ENCODE measurements at regions of chr15 and their contacts with region 1.

Region 1: DNA sequence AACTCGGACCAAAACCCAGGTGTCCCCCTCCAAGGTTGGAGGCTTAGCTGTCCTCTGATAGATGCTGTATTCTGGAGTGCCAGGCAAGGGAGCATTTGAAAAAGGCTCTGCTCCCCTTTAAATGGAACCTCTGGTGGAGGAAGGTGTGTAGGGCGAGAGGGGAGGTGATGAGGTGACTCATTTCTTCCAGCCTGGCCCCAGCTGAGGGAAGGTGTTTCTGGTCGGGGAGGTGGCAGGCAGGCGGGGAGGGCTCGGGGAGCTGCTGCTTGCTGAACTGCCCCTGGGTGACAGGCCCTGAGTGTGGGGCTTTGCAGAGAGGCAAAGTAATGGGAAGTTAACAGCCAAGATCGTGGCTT is 18.8 kb downstream of the PSTPIP1 start:
- DNase-seq: no peak
- ATAC-seq: peak; percentile 82
- H3K4me3 ChIP-seq: no peak overlapping the region
- H3K27ac ChIP-seq: peak overlapping the region; percentile 66; the same call in 1 of the 2 replicates
- H3K4me1 ChIP-seq: peaks cover 31% of the 10 kb centered on the region
- H3K27me3 ChIP-seq: no peaks in the 10 kb centered on the region
- CTCF ChIP-seq: 0 out of 6 replicates have a peak, but pooled peaks of 1 of the 3 experiments have one; percentile 1
- EP300 ChIP-seq: peak; percentile 52 to 54; a peak in 3 of 4 replicates
- POLR2A ChIP-seq: no peak
- RAD21 ChIP-seq: no peak

Region 2: GRCh38 chr15:76846782-76847181 is 167.0 kb before region 1 on chr15:
- CTCF ChIA-PET with region 1: no interaction called
- POLR2A ChIA-PET with region 1: no interaction called
- RAD21 ChIA-PET with region 1: no interaction called
- SMC1A ChIA-PET with region 1: no interaction called
- in situ Hi-C with region 1: no loop called
- intact Hi-C with region 1: no loop called
- DNase-seq: no peak
- ATAC-seq: no peak
- H3K4me3 ChIP-seq: no peak overlapping the region
- H3K27ac ChIP-seq: no peak overlapping the region
- H3K4me1 ChIP-seq: peaks cover 6% of the 10 kb centered on the region; the same call in 1 of the 2 replicates
- H3K27me3 ChIP-seq: no peaks in the 10 kb centered on the region
- CTCF ChIP-seq: no peak
- EP300 ChIP-seq: no peak
- POLR2A ChIP-seq: no peak
- RAD21 ChIP-seq: no peak

Region 3: DNA sequence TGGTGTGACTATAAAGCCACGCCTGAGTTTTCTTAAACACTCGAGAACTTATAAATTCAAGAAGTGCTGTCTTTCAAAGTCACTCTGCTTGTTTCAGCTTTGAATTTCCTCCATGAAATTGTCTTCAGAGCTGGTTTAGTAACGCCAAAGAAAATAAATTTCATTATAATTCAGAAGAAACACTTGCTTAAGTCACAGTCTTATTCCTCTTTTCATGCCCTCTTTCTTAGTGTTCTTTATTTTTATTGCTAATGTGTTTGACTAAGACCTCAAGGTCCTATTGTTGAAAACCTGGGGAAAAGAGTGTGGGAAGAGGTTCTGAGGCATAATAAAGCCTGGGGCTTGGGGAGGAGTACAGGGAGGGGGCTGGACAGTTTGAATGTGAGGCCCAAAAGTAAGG is 85.5 kb before region 1 on chr15:
- CTCF ChIA-PET with region 1: no interaction called
- POLR2A ChIA-PET with region 1: no interaction called
- RAD21 ChIA-PET with region 1: no interaction called
- SMC1A ChIA-PET with region 1: no interaction called
- in situ Hi-C with region 1: no loop called
- intact Hi-C with region 1: no loop called
- DNase-seq: no peak
- ATAC-seq: no peak
- H3K4me3 ChIP-seq: no peak overlapping the region
- H3K27ac ChIP-seq: no peak overlapping the region
- H3K4me1 ChIP-seq: no peaks in the 10 kb centered on the region
- H3K27me3 ChIP-seq: peaks cover 0 to 2% of the 10 kb centered on the region in 2 experiments; a peak in 2 of 4 replicates
- CTCF ChIP-seq: no peak
- EP300 ChIP-seq: no peak
- POLR2A ChIP-seq: no peak
- RAD21 ChIP-seq: no peak

Region 4: DNA sequence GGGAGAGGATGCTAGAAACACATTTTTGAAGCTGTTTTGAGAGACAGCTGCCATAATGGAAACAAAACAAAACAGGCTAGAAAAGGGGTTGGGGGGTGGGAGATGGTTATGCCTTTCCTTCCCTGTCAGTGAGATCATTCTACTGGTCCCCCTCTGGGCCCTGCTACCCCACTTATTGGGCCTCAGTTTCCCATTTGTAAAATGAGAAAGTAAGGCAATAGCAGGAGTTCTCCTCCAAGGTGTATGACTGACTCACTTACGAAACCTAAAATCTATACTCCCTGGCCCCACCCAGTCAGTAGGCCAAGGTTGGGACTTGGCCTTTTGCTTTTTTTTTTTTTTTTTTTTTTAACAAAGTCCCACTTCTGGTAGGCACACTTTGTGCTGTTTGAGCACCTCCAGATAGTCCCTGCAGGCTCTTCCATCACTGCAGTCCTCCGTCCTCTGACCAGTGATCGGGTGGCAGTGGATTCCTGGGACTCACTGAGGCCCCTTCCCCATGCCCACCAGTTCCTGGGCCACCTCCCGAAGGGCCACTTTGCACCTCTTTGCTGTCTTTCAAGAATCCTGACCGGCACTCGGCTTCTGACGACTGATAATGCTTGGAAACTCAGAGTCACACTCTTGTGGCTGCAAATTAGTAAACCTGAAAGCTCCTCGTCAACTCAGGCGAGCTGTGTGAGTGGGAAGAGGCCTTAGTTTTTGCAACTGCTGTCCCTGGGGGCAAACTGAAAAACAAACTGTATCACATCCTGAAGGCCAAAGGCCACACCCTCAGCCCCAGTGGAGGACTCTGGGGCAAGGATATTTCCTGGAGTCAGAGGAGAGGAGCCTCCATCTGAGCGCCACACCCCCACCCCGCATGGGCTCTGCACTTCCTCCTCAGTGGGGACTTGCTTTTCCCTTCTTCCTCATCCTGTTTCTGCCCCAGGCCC is 25.6 kb before region 1 on chr15:
- CTCF ChIA-PET with region 1: interaction called, 11 read pairs
- POLR2A ChIA-PET with region 1: interaction called, 10 read pairs
- RAD21 ChIA-PET with region 1: interaction called, 259 read pairs
- SMC1A ChIA-PET with region 1: interaction called, 26 read pairs
- in situ Hi-C with region 1: no loop called
- intact Hi-C with region 1: no loop called
- DNase-seq: peak; percentile 90
- ATAC-seq: peak; percentile 91
- H3K4me3 ChIP-seq: peak overlapping the region; percentile 40; the same call in 1 of the 2 replicates
- H3K27ac ChIP-seq: peak overlapping the region; percentile 89
- H3K4me1 ChIP-seq: peaks cover 41% of the 10 kb centered on the region
- H3K27me3 ChIP-seq: no peaks in the 10 kb centered on the region
- CTCF ChIP-seq: no peak
- EP300 ChIP-seq: peak; percentile 79 to 94; a peak in 3 of 4 replicates
- POLR2A ChIP-seq: peak; percentile 53
- RAD21 ChIP-seq: peak; percentile 25; the same call in 1 of the 2 replicates

Region 5: GRCh38 chr15:76994971-76995945 is 18.5 kb before region 1 on chr15 and contains the start of gene PSTPIP1:
- CTCF ChIA-PET with region 1: interaction called, 11 read pairs
- POLR2A ChIA-PET with region 1: interaction called, 19 read pairs
- RAD21 ChIA-PET with region 1: interaction called, 32 read pairs
- SMC1A ChIA-PET with region 1: interaction called, 28 read pairs
- in situ Hi-C with region 1: no loop called
- intact Hi-C with region 1: no loop called
- DNase-seq: no peak
- ATAC-seq: peak; percentile 64
- H3K4me3 ChIP-seq: peak within 1 kb of the TSS; percentile 68
- H3K27ac ChIP-seq: peak within 1 kb of the TSS; percentile 55
- H3K4me1 ChIP-seq: peaks cover 32% of the 10 kb centered on the region
- H3K27me3 ChIP-seq: no peaks in the 10 kb centered on the region
- CTCF ChIP-seq: no peak
- EP300 ChIP-seq: no peak
- POLR2A ChIP-seq: peak; percentile 95
- RAD21 ChIP-seq: no peak
- polyA plus RNA-seq, gene PSTPIP1: 0.50 to 5.7 TPM

Region 6: DNA sequence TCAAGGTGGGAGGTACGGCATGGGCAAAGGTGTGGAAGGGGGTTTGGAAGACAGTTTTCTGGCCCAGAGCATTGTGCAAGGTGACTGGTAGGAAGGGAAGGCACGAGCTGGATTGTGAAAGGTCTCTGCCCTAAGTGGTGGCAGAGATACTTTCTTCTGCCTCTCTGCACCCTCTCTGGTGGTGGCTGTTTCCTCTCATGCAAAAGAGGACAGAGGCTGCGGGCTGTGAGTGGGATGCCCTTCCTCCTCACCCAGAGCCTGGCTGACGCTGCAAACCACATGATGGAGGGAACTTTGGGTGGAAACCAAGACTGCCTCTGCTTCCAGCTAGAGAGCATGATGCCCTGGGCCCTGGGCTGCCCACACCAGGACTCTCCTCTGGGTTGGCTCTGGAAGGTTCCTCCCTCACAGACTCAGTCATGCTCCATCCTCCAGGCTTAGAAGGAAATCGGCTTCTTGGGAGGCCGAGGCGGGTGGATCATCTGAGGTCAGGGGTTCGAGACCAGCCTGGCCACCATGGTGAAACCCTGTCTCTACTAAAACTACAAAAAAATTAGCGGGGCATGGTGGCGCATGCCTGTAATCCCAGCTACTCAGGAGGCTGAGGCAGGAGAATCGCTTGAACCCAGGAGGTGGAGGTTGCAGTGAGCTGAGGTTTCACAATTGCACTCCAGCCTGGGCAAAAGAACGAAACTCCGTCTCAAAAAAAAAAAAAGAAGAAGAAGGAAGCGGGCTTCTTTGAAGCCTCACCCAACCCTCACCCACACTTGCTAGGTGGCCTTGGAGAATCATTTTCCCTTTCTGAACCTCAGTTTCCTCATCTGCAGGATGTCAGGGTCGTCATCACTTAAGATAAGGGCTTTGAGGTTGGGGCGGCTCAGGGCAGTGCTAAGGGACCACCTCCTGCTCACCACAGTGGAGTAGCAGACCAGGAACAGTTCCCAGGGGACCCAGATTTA is 10.5 kb before region 1 on chr15:
- CTCF ChIA-PET with region 1: interaction called, 11 read pairs
- POLR2A ChIA-PET with region 1: interaction called, 19 read pairs
- RAD21 ChIA-PET with region 1: interaction called, 21 read pairs
- SMC1A ChIA-PET with region 1: interaction called, 28 read pairs
- in situ Hi-C with region 1: no loop called
- intact Hi-C with region 1: no loop called
- DNase-seq: peak; percentile 77
- ATAC-seq: peak; percentile 90
- H3K4me3 ChIP-seq: peak overlapping the region; percentile 26; the same call in 1 of the 2 replicates
- H3K27ac ChIP-seq: peak overlapping the region; percentile 16
- H3K4me1 ChIP-seq: peaks cover 27% of the 10 kb centered on the region
- H3K27me3 ChIP-seq: no peaks in the 10 kb centered on the region
- CTCF ChIP-seq: no peak
- EP300 ChIP-seq: peak in 1 of 2 experiments; percentile 20; a peak in 1 of 4 replicates
- POLR2A ChIP-seq: no peak
- RAD21 ChIP-seq: no peak

Measured in GM12878 (cell line).